A549 (cell line): ENCODE measurements at regions of chr10 and their contacts with region 1.

Region 1: GRCh38 chr10:96319754-96320474 is 15.7 kb downstream of the DNTT start:
- DNase-seq: peak in 1 of 2 experiments; percentile 13
- ATAC-seq: peak; percentile 23 to 30; a peak in 3 of 6 replicates
- H3K4me3 ChIP-seq: no peak overlapping the region
- H3K27ac ChIP-seq: peak overlapping the region; percentile 34 to 67; a peak in 4 of 6 replicates
- H3K4me1 ChIP-seq: peaks cover 8% of the 10 kb centered on the region; the same call in 1 of the 3 replicates
- CTCF ChIP-seq: no peak
- EP300 ChIP-seq: no peak
- POLR2A ChIP-seq: no peak
- RAD21 ChIP-seq: no peak

Region 2: DNA sequence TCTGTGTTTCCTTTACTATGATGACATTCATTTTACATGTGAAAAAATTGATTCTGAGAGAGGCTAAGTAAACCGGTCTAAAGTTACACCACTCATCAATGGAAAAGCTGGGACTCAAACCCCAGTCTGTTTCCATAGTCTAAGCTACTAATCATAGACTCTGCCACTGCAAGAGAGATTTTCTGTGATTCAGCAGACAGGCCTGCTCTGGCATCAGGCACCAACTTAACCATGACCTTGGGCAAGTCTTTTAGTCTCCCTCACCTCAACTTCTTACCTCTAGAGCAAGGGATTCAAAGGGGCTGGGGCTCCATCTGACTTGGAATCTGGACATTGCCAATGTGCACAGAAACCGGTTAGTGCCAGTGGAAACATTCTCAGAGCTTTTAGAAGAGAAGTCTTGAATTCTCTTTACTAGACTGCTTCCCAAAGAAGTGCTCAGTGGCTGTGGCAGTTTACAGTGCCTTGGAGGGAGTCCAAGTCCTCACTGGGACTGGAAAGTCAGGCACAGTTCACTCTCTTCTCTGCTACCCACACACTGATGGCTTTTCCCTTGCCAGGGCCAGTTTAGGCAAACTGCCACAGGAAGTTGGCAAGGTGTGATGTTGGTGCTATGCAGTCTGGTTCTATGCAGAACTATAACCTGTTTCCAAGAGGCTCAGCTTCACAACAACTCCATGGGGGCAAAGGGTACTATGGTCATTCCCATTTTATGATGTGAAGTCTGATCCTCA is 44.1 kb before region 1 on chr10:
- CTCF ChIA-PET with region 1: no interaction called
- POLR2A ChIA-PET with region 1: no interaction called
- DNase-seq: no peak
- ATAC-seq: no peak
- H3K4me3 ChIP-seq: no peak overlapping the region
- H3K27ac ChIP-seq: no peak overlapping the region
- H3K4me1 ChIP-seq: no peaks in the 10 kb centered on the region
- CTCF ChIP-seq: no peak
- EP300 ChIP-seq: no peak
- POLR2A ChIP-seq: no peak
- RAD21 ChIP-seq: no peak

Region 3: GRCh38 chr10:96334616-96335526 is 15.0 kb after region 1 on chr10:
- CTCF ChIA-PET with region 1: interaction called, 18 read pairs
- POLR2A ChIA-PET with region 1: no interaction called
- DNase-seq: peak; percentile 55 to 71
- ATAC-seq: peak; percentile 82 to 91; a peak in 5 of 6 replicates
- H3K4me3 ChIP-seq: no peak overlapping the region
- H3K27ac ChIP-seq: no peak overlapping the region
- H3K4me1 ChIP-seq: no peaks in the 10 kb centered on the region
- CTCF ChIP-seq: peak; percentile 76
- EP300 ChIP-seq: no peak
- POLR2A ChIP-seq: no peak
- RAD21 ChIP-seq: peak; percentile 46 to 60